CD8-positive, alpha-beta T cell (primary cell): ENCODE measurements at regions of chr2 and their contacts with region 1.

Region 1: GRCh38 chr2:234425619-234426603 is 71.0 kb downstream of the ARL4C start:
- DNase-seq: peak; percentile 61 to 94 (median 79)
- ATAC-seq: peak; percentile 72
- H3K4me3 ChIP-seq: peak overlapping the region in 1 of 2 experiments; percentile 31
- H3K4me3 Mint-ChIP-seq: peak overlapping the region; percentile 74
- H3K27ac ChIP-seq: peak overlapping the region; percentile 83 to 92
- H3K27ac Mint-ChIP-seq: peak overlapping the region; percentile 100
- H3K4me1 ChIP-seq: peaks cover 85% of the 10 kb centered on the region
- H3K4me1 Mint-ChIP-seq: peaks cover 91% of the 10 kb centered on the region
- H3K27me3 ChIP-seq: no peaks in the 10 kb centered on the region
- H3K27me3 Mint-ChIP-seq: no peaks in the 10 kb centered on the region
- CTCF ChIP-seq: no peak

Region 2: DNA sequence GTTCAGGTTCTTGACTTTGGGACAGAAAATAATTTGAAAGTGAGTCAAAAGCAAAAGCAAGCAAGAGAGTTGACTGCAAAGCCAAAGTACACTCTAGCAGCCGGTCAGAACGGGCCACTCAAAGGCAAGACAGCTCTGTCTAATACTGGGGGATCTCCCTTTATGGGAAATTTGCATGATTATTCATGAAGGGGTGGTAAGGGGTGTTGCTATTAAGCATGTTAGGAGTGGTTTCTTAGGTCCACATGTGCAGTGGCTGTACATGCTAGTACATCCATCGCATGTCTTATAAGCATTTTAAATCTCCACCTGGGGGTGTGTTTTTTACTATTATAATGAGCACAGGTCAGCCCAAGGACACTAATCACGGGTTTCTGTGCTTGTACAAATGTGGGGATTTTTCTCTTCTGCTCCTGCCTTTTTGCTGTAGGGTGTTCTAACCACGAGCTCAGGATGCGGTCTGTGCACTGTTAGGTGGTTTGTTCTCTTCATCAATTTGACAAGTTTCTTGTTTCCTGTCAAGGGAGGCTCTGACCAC is 435.6 kb before region 1 on chr2:
- CTCF ChIA-PET with region 1: no interaction called
- POLR2A ChIA-PET with region 1: no interaction called
- intact Hi-C with region 1: loop called in 1 of 2 experiments (anchors 10 kb)
- DNase-seq: peak; percentile 15 to 93 (median 64)
- ATAC-seq: peak; percentile 82
- H3K4me3 ChIP-seq: peak overlapping the region in 1 of 2 experiments; percentile 6
- H3K4me3 Mint-ChIP-seq: peak overlapping the region; percentile 19
- H3K27ac ChIP-seq: peak overlapping the region; percentile 3 to 44
- H3K27ac Mint-ChIP-seq: peak overlapping the region; percentile 87
- H3K4me1 ChIP-seq: peaks cover 48% of the 10 kb centered on the region
- H3K4me1 Mint-ChIP-seq: peaks cover 67% of the 10 kb centered on the region
- H3K27me3 ChIP-seq: no peaks in the 10 kb centered on the region
- H3K27me3 Mint-ChIP-seq: no peaks in the 10 kb centered on the region
- CTCF ChIP-seq: no peak

Region 3: DNA sequence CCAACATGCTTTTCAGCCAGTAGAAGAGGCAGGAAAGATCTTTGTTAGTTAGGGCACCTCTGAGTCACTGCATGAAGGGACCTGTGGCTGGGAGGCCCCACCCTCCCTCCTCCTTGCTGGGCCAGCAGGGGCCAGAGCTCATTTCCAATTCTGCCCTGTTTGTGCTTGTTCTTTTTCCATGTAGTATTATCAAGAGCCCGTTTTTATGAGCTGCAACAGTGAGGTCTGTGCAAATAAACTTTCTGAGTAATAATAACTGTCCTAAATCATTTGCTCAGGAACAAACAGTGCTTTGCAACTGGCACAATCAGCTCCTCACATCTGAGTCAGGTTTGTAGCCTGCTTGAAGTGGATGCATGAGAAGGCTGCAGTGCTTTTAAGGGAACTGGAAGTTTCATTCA is 57.0 kb before region 1 on chr2:
- CTCF ChIA-PET with region 1: interaction called, 4 read pairs
- POLR2A ChIA-PET with region 1: interaction called, 6 read pairs
- intact Hi-C with region 1: loop called (anchors 5 kb)
- DNase-seq: peak in 8 of 9 experiments; percentile 31 to 70 (median 57)
- ATAC-seq: peak; percentile 74
- H3K4me3 ChIP-seq: no peak overlapping the region
- H3K4me3 Mint-ChIP-seq: peak overlapping the region; percentile 7
- H3K27ac ChIP-seq: peak overlapping the region in 1 of 2 experiments; percentile 54
- H3K27ac Mint-ChIP-seq: peak overlapping the region; percentile 87
- H3K4me1 ChIP-seq: peaks cover 73% of the 10 kb centered on the region
- H3K4me1 Mint-ChIP-seq: peaks cover 77% of the 10 kb centered on the region
- H3K27me3 ChIP-seq: no peaks in the 10 kb centered on the region
- H3K27me3 Mint-ChIP-seq: no peaks in the 10 kb centered on the region
- CTCF ChIP-seq: no peak

Region 4: GRCh38 chr2:234446404-234447076 is 20.6 kb after region 1 on chr2:
- CTCF ChIA-PET with region 1: interaction called, 32 read pairs
- POLR2A ChIA-PET with region 1: interaction called, 77 read pairs
- intact Hi-C with region 1: loop called (anchors 1 kb)
- DNase-seq: peak; percentile 63 to 97 (median 81)
- ATAC-seq: peak; percentile 84
- H3K4me3 ChIP-seq: no peak overlapping the region
- H3K4me3 Mint-ChIP-seq: peak overlapping the region; percentile 70
- H3K27ac ChIP-seq: peak overlapping the region; percentile 90 to 94
- H3K27ac Mint-ChIP-seq: peak overlapping the region; percentile 98
- H3K4me1 ChIP-seq: peaks cover 82% of the 10 kb centered on the region
- H3K4me1 Mint-ChIP-seq: peaks cover 84% of the 10 kb centered on the region
- H3K27me3 ChIP-seq: no peaks in the 10 kb centered on the region
- H3K27me3 Mint-ChIP-seq: no peaks in the 10 kb centered on the region
- CTCF ChIP-seq: no peak

Region 5: DNA sequence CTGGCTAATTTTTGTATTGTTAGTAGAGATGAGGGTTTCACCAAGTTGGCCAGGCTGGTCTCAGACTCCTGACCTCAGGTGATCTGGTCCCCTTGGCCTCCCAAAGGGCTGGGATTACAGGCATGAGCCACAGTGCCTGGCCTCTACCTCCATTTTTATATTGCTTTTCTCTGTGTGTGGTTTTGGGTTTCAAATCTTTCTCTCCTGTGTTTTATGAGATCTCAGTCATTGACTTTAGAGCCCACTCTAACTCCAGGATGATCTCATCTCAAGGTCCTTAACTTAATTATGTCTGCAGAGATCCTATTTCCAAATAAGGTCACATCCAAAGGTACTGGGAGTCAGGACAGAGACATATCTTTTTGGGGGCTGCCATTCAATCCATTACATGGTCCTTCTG is 46.2 kb after region 1 on chr2:
- CTCF ChIA-PET with region 1: no interaction called
- POLR2A ChIA-PET with region 1: no interaction called
- intact Hi-C with region 1: no loop called
- DNase-seq: no peak
- ATAC-seq: no peak
- H3K4me3 ChIP-seq: no peak overlapping the region
- H3K4me3 Mint-ChIP-seq: no peak overlapping the region
- H3K27ac ChIP-seq: no peak overlapping the region
- H3K27ac Mint-ChIP-seq: no peak overlapping the region
- H3K4me1 ChIP-seq: no peaks in the 10 kb centered on the region
- H3K4me1 Mint-ChIP-seq: peaks cover 29% of the 10 kb centered on the region
- H3K27me3 ChIP-seq: no peaks in the 10 kb centered on the region
- H3K27me3 Mint-ChIP-seq: no peaks in the 10 kb centered on the region
- CTCF ChIP-seq: no peak

Region 6: DNA sequence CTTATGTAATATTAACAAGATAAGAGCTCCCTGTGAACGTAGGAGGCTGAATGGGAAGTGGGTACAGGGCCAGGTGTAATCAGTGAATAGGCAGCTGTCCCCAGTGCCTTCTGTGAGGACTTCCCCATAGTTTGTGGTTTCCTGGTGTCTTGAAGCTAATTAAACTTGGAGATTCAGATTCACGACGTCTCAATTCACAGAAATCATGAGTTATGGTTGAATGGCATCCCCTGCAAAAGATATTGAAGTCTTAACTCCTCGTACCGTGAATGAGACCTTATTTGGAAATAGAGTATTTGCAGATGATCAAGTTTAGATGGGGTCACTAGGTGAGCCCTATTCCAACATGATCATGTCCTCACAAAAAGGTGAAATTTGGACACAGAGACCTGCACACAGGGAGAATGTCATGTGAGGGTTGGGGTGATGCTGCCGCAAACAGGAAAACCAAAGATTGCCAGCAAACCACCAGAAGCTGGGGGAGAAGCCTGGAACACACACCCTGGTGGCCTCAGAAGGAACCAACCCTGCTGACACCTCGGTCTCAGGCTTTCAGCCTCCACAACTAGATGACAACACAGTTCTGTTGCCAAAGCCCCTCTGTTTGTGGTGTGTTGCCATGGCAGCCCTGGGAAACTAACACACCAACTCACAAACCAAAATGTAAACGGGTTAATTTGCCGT is 57.8 kb after region 1 on chr2:
- CTCF ChIA-PET with region 1: interaction called, 23 read pairs
- POLR2A ChIA-PET with region 1: interaction called, 13 read pairs
- intact Hi-C with region 1: loop called (anchors 1 to 2 kb)
- DNase-seq: peak; percentile 70 to 97 (median 87)
- ATAC-seq: peak; percentile 76
- H3K4me3 ChIP-seq: peak overlapping the region; percentile 0 to 12
- H3K4me3 Mint-ChIP-seq: peak overlapping the region; percentile 64
- H3K27ac ChIP-seq: peak overlapping the region; percentile 78 to 89
- H3K27ac Mint-ChIP-seq: peak overlapping the region; percentile 98
- H3K4me1 ChIP-seq: peaks cover 62% of the 10 kb centered on the region
- H3K4me1 Mint-ChIP-seq: peaks cover 84% of the 10 kb centered on the region
- H3K27me3 ChIP-seq: no peaks in the 10 kb centered on the region
- H3K27me3 Mint-ChIP-seq: no peaks in the 10 kb centered on the region
- CTCF ChIP-seq: peak; percentile 70

Region 7: GRCh38 chr2:234564699-234565098 is 138.8 kb after region 1 on chr2:
- CTCF ChIA-PET with region 1: no interaction called
- POLR2A ChIA-PET with region 1: no interaction called
- intact Hi-C with region 1: no loop called
- DNase-seq: no peak
- ATAC-seq: no peak
- H3K4me3 ChIP-seq: no peak overlapping the region
- H3K4me3 Mint-ChIP-seq: no peak overlapping the region
- H3K27ac ChIP-seq: no peak overlapping the region
- H3K27ac Mint-ChIP-seq: no peak overlapping the region
- H3K4me1 ChIP-seq: no peaks in the 10 kb centered on the region
- H3K4me1 Mint-ChIP-seq: no peaks in the 10 kb centered on the region
- H3K27me3 ChIP-seq: no peaks in the 10 kb centered on the region
- H3K27me3 Mint-ChIP-seq: peaks cover 19% of the 10 kb centered on the region
- CTCF ChIP-seq: no peak

Region 8: GRCh38 chr2:234818937-234819336 is 393.0 kb after region 1 on chr2:
- CTCF ChIA-PET with region 1: no interaction called
- POLR2A ChIA-PET with region 1: no interaction called
- intact Hi-C with region 1: no loop called
- DNase-seq: no peak
- ATAC-seq: no peak
- H3K4me3 ChIP-seq: no peak overlapping the region
- H3K4me3 Mint-ChIP-seq: no peak overlapping the region
- H3K27ac ChIP-seq: no peak overlapping the region
- H3K27ac Mint-ChIP-seq: no peak overlapping the region
- H3K4me1 ChIP-seq: no peaks in the 10 kb centered on the region
- H3K4me1 Mint-ChIP-seq: no peaks in the 10 kb centered on the region
- H3K27me3 ChIP-seq: peaks cover 0 to 1% of the 10 kb centered on the region in 2 experiments
- H3K27me3 Mint-ChIP-seq: peaks cover 10% of the 10 kb centered on the region
- CTCF ChIP-seq: no peak